ENCODE measurements at regions of chr16 and their contacts with region 1.

Region 1: DNA sequence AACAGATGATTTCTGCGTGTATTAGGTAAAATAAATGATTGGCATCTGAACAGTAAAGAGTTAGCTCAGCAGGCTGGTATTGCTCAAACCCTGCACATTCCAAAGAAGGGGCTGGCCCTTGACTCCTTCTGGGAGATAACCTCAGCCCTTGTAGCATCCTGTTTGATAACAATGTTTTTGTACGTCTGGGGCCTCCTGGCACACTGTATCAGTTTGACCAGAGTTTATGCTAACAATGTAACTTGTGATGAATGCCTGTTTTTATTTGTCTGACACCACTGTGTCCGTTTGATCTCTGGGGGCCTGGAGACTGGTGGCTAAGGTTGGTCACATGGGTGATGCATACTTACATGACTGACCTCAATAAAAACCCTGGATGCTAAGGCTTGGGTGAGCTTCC is 43.8 kb upstream of the NDRG4 start:
- DNase-seq: no peak
- CTCF ChIP-seq: no peak

Region 2: GRCh38 chr16:58442547-58442946 is 13.6 kb before region 1 on chr16:
- CTCF ChIA-PET with region 1: interaction called, 13 read pairs
- POLR2A ChIA-PET with region 1: no interaction called
- DNase-seq: no peak
- CTCF ChIP-seq: no peak